Cardiac septum (tissue), 1 donor: ENCODE measurements at regions of chr19 and their contacts with region 1.

Region 1: GRCh38 chr19:16495982-16496612 is at the starts of genes C19orf44 and CALR3:
- DNase-seq: peak; percentile 99
- total RNA-seq, gene C19orf44: 3.1 TPM
- total RNA-seq, gene CALR3: not detected

Region 2: DNA sequence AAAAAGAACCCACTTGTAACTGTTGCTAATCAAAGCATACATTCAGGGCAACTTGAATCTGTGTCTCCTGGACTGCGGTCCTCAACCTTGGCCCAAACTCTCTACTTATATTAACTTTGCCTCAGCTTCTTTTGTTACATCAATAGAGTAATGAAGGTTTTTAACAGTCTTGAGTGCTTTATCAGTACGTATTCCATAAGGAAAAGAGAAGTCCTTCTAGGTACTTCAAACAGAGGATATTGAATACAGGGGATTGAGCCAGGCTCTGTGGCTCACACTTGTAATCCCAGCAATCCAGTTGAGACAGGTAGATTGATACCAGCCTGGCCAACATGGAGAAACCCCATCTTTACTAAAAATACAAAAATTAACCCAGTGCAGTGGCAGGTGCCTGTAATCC is 23.1 kb before region 1 on chr19:
- intact Hi-C with region 1: loop called (anchors 1 kb)
- DNase-seq: no peak

Region 3: GRCh38 chr19:16542045-16542909 is 46.2 kb after region 1 on chr19 and contains the start of gene CHERP:
- intact Hi-C with region 1: loop called (anchors 5 kb)
- DNase-seq: peak; percentile 97
- total RNA-seq, gene CHERP: 23.7 TPM